Heart left ventricle (tissue), 16 donors: ENCODE measurements at regions of chr1 and their contacts with region 1.

Region 1: DNA sequence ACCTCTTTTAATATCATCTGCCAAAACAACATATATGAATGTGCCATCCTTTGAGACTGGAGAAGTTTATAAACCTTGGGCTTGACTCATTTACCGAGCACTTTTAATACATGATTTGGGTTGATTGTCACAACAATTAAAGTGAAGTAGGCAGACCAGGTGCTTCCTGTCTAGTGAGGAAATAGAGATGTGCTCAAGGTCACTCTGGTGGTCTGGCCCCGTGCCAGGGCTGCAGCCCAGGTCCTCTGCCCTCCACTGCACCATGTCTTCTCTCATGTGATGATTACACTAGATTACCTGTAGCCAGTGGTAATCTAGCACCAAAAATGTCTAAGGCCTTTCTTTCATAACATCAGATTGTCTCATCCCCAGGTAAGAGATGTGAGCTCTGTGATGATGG is 61.8 kb upstream of the LAMC2 start:
- DNase-seq: no peak
- ATAC-seq: peak in 1 of 4 donors; percentile 27
- H3K4me3 ChIP-seq: no peak overlapping the region
- H3K27ac ChIP-seq: peak overlapping the region in 2 of 12 donors; percentile 4 to 15
- H3K4me1 ChIP-seq: peaks cover 0 to 15% (median 0%) of the 10 kb centered on the region in 12 donors
- H3K27me3 ChIP-seq: no peaks in the 10 kb centered on the region
- CTCF ChIP-seq: no peak
- POLR2A ChIP-seq: no peak

Region 2: DNA sequence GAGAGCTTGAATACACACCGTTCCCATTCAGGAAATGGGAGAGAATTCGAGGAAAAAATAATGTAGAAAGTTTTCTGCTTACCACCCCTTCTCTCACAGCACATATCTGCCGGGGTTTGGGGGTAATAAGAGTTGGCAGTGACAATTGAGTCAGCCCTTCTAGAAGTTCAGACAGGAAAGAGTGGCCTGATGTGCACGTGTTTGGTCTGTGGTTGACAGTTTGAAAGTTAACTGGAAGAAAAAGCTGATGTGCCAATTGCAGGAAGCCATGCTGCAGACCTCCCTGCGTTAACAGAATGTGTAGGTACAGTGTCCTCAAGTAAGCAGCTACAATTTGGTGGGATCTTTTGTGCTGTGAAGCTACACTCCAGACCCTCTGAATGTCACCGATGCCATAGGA is 234.3 kb before region 1 on chr1:
- intact Hi-C with region 1: loop called in 1 of 10 experiments (anchors 10 kb)
- DNase-seq: no peak
- ATAC-seq: no peak
- H3K4me3 ChIP-seq: no peak overlapping the region
- H3K27ac ChIP-seq: peak overlapping the region in 1 of 12 donors; percentile 2
- H3K4me1 ChIP-seq: no peaks in the 10 kb centered on the region
- H3K27me3 ChIP-seq: no peaks in the 10 kb centered on the region
- CTCF ChIP-seq: no peak
- POLR2A ChIP-seq: no peak

Region 3: GRCh38 chr1:183030053-183030452 is 94.2 kb before region 1 on chr1:
- intact Hi-C with region 1: loop called in 1 of 10 experiments (anchors 5 kb)
- DNase-seq: no peak
- ATAC-seq: peak in 1 of 4 donors; percentile 39
- H3K4me3 ChIP-seq: peak overlapping the region in 5 of 12 donors; percentile 10 to 95 (median 91)
- H3K27ac ChIP-seq: peak overlapping the region in 2 of 12 donors; percentile 4 to 32
- H3K4me1 ChIP-seq: peaks cover 0 to 78% (median 35%) of the 10 kb centered on the region in 12 donors
- H3K27me3 ChIP-seq: no peaks in the 10 kb centered on the region
- CTCF ChIP-seq: no peak
- POLR2A ChIP-seq: no peak

Region 4: DNA sequence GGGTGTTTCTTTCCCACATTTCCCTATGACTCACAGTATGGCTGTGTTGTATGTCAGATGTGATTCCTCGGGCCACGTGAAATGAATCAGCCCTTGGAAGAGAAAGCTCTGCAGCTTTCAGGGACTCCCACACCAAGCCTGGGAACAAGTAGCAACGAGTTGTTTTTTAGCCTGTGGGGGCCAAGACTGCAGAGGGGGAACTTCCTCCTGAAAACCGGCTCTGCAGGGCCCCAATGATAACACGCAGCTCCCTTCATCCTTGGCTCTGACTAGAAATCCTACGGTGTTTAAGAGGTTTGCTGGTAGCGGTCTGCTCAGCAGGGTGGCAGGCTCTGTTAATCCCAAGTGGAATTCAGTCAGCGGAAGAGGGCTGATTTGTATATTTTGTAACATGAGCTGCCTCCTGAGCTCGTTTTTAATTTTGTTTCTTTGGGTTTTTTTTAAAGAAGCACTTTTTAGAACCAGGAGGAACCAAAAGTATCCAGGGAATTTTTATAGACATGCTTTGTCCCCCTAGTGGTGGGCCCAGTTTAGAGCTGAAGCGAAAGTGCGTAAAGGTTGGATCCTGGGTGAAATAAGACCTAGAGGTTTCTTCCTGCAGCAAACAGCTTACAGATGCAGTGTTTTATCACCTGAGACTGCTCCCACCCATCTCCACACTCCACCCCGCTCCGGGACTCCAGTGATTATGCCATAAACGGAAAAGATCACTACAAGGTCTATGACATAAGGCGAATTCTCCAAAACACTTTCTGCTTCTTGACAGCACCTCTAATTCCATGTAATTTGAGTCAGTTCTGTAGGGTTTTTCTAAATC is 110.6 kb after region 1 on chr1:
- intact Hi-C with region 1: loop called in 1 of 10 experiments (anchors 10 kb)
- DNase-seq: peak in 4 of 5 donors; percentile 68 to 76 (median 70)
- ATAC-seq: peak; percentile 70 to 92 (median 92)
- H3K4me3 ChIP-seq: peak overlapping the region in 10 of 12 donors; percentile 12 to 51 (median 32)
- H3K27ac ChIP-seq: peak overlapping the region; percentile 33 to 83 (median 72)
- H3K4me1 ChIP-seq: peaks cover 0 to 41% (median 10%) of the 10 kb centered on the region in 12 donors
- H3K27me3 ChIP-seq: no peaks in the 10 kb centered on the region
- CTCF ChIP-seq: peak in 11 of 12 donors; percentile 34 to 74 (median 59)
- POLR2A ChIP-seq: no peak